ENCODE measurements at regions of chr1 and their contacts with region 1.

Region 1: GRCh38 chr1:17661546-17662157 is 93.5 kb upstream of the ACTL8 start:
- DNase-seq: peak; percentile 82
- ATAC-seq: no peak
- H3K4me3 Mint-ChIP-seq: no peak overlapping the region
- H3K27ac Mint-ChIP-seq: no peak overlapping the region
- H3K4me1 Mint-ChIP-seq: no peaks in the 10 kb centered on the region
- H3K27me3 Mint-ChIP-seq: no peaks in the 10 kb centered on the region

Region 2: GRCh38 chr1:17729248-17729647 is 67.6 kb after region 1 on chr1:
- CTCF ChIA-PET with region 1: no interaction called
- POLR2A ChIA-PET with region 1: no interaction called
- intact Hi-C with region 1: no loop called
- DNase-seq: no peak
- ATAC-seq: no peak
- H3K4me3 Mint-ChIP-seq: no peak overlapping the region
- H3K27ac Mint-ChIP-seq: no peak overlapping the region
- H3K4me1 Mint-ChIP-seq: no peaks in the 10 kb centered on the region
- H3K27me3 Mint-ChIP-seq: no peaks in the 10 kb centered on the region

Region 3: DNA sequence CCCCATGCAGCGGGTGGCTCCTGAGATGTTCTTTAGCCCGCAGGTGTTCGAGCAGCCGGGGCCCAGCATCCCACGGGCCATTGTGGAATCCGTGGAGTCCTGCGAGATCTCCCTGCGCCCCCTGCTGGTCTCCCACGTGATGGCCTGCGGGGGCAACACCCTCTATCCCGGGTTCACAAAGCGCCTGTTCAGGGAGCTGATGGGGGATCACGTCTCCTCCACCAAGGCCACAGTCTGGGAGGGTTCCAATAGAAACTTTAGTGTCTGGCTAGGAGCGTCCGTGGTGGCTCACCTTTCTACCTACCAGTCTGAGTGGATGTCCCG is 164.5 kb after region 1 on chr1:
- CTCF ChIA-PET with region 1: interaction called, 3 read pairs
- POLR2A ChIA-PET with region 1: no interaction called
- intact Hi-C with region 1: loop called (anchors 1 to 2 kb)
- DNase-seq: peak; percentile 58
- ATAC-seq: no peak
- H3K4me3 Mint-ChIP-seq: no peak overlapping the region
- H3K27ac Mint-ChIP-seq: no peak overlapping the region
- H3K4me1 Mint-ChIP-seq: no peaks in the 10 kb centered on the region
- H3K27me3 Mint-ChIP-seq: peaks cover 14% of the 10 kb centered on the region

Region 4: GRCh38 chr1:17998889-17999288 is 337.2 kb after region 1 on chr1:
- CTCF ChIA-PET with region 1: no interaction called
- POLR2A ChIA-PET with region 1: no interaction called
- intact Hi-C with region 1: loop called in 1 of 2 experiments (anchors 10 kb)
- DNase-seq: peak; percentile 8
- ATAC-seq: no peak
- H3K4me3 Mint-ChIP-seq: no peak overlapping the region
- H3K27ac Mint-ChIP-seq: no peak overlapping the region
- H3K4me1 Mint-ChIP-seq: no peaks in the 10 kb centered on the region
- H3K27me3 Mint-ChIP-seq: peaks cover 14% of the 10 kb centered on the region

Region 5: DNA sequence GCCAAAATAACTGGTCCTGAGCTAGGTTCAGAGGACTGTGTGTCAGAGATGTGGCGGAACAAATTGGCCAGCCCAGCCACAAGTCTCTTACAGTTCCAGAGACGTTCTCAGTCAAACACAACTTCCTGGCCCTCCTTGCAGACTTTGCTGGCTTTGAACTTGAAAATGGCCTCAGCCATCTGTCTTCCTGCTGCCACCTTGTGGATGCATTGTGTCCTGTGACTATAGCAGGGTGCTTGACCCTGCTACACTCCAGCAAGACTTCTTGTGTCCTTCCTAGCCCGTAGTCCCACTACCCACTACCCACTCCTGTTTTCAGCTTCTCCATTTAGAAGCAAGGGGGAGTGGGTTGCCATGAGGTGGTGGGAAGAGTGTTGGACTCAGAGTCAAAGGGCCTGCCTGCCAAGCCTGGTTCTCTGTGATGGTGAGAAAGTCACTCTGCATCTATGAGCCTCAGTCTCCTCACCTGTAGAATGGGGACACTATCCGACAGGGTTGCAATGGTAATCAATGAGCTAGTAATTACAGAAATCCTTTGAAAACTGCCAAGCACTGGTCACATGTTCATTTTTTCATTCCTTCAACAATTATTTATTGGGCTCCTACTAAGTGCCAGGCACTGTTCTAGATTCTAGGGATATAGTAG is 555.9 kb after region 1 on chr1:
- CTCF ChIA-PET with region 1: no interaction called
- POLR2A ChIA-PET with region 1: no interaction called
- intact Hi-C with region 1: loop called (anchors 5 to 10 kb)
- DNase-seq: peak; percentile 31
- ATAC-seq: no peak
- H3K4me3 Mint-ChIP-seq: no peak overlapping the region
- H3K27ac Mint-ChIP-seq: no peak overlapping the region
- H3K4me1 Mint-ChIP-seq: no peaks in the 10 kb centered on the region
- H3K27me3 Mint-ChIP-seq: peaks cover 15% of the 10 kb centered on the region

Region 6: GRCh38 chr1:18299441-18300338 is 638.0 kb after region 1 on chr1:
- CTCF ChIA-PET with region 1: interaction called, 3 read pairs
- POLR2A ChIA-PET with region 1: no interaction called
- intact Hi-C with region 1: loop called in 1 of 2 experiments (anchors 2 kb)
- DNase-seq: peak; percentile 28
- ATAC-seq: no peak
- H3K4me3 Mint-ChIP-seq: no peak overlapping the region
- H3K27ac Mint-ChIP-seq: no peak overlapping the region
- H3K4me1 Mint-ChIP-seq: no peaks in the 10 kb centered on the region
- H3K27me3 Mint-ChIP-seq: peaks cover 24% of the 10 kb centered on the region